ENCODE measurements at regions of chr9 and their contacts with region 1.

Region 1: DNA sequence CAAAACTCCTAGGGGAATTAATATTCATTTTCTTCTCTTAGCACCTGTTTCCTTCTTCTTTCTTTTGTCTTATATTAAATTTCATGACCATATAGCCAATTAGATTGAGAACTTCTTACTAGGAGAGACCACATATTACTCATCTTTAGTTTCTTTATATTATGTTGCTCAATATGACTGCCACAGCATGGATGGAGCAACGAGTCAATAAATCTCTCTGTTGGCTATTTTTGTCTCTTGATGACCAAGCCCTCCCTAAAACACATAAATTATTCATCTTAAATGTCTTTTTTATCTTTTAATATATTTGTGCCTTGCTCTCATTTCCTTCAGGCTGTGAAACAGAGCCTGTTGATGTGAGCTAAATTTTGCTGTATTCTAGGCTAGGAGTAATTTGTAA is 123.0 kb downstream of the ADAMTSL1 start:
- DNase-seq: no peak
- H3K4me3 Mint-ChIP-seq: no peak overlapping the region
- H3K27ac Mint-ChIP-seq: no peak overlapping the region
- H3K4me1 Mint-ChIP-seq: no peaks in the 10 kb centered on the region
- H3K27me3 Mint-ChIP-seq: no peaks in the 10 kb centered on the region

Region 2: DNA sequence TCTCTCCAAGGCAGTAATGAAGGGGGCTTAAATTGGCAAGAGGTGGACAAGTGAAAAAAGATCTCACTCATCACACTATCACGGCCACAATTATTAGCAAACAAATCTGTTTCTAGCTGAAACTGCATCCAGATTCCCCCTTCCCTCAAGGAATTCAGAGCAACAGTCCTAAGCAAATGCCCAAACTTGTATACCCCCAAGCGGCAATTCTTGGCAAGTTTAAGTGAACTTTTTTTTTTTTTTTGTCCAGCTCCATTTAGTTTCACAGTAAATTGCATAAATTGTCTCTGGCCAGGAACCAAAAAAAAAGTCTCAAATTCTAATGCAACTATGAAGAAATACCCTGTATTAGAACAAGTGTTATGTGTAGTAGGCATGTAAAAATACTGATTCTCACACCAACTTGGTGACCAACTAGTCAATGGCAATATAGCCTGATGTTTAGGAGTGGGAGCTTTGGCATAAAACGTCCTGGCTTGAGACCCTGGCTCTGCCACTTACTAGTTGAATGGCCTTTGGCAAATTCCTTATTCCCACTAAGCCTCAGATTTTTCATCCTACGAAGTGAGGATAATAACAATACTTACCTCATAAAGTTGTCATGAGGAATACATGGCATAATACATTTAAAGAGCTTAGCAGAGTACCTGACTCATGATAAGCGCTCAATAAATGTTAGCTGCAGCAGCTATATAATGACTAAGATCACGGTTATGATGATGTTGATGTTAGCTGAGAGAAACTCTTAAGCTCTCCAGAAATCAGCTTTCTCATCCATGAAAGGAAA is 70.3 kb after region 1 on chr9:
- CTCF ChIA-PET with region 1: no interaction called
- POLR2A ChIA-PET with region 1: no interaction called
- intact Hi-C with region 1: loop called (anchors 10 kb)
- DNase-seq: no peak
- H3K4me3 Mint-ChIP-seq: no peak overlapping the region
- H3K27ac Mint-ChIP-seq: no peak overlapping the region
- H3K4me1 Mint-ChIP-seq: no peaks in the 10 kb centered on the region
- H3K27me3 Mint-ChIP-seq: no peaks in the 10 kb centered on the region

Region 3: GRCh38 chr9:19239955-19240354 is 643.0 kb after region 1 on chr9:
- CTCF ChIA-PET with region 1: no interaction called
- POLR2A ChIA-PET with region 1: no interaction called
- intact Hi-C with region 1: no loop called
- DNase-seq: no peak
- H3K4me3 Mint-ChIP-seq: no peak overlapping the region
- H3K27ac Mint-ChIP-seq: no peak overlapping the region
- H3K4me1 Mint-ChIP-seq: peaks cover 27% of the 10 kb centered on the region
- H3K27me3 Mint-ChIP-seq: no peaks in the 10 kb centered on the region